ENCODE measurements at regions of chr2 and their contacts with region 1.

Region 1: GRCh38 chr2:144449028-144449406 is 70.9 kb downstream of the ZEB2 start:
- DNase-seq: peak; percentile 57
- ATAC-seq: peak; percentile 85
- H3K4me3 Mint-ChIP-seq: no peak overlapping the region
- H3K27ac Mint-ChIP-seq: no peak overlapping the region
- H3K4me1 Mint-ChIP-seq: peaks cover 71% of the 10 kb centered on the region
- H3K27me3 Mint-ChIP-seq: peaks cover 39% of the 10 kb centered on the region
- CTCF ChIP-seq: peak; percentile 19; the same call in 1 of the 2 replicates

Region 2: GRCh38 chr2:144274131-144274530 is 174.9 kb before region 1 on chr2:
- CTCF ChIA-PET with region 1: no interaction called
- POLR2A ChIA-PET with region 1: no interaction called
- DNase-seq: no peak
- ATAC-seq: no peak
- H3K4me3 Mint-ChIP-seq: no peak overlapping the region
- H3K27ac Mint-ChIP-seq: no peak overlapping the region
- H3K4me1 Mint-ChIP-seq: peaks cover 33% of the 10 kb centered on the region
- H3K27me3 Mint-ChIP-seq: no peaks in the 10 kb centered on the region
- CTCF ChIP-seq: no peak

Region 3: GRCh38 chr2:144438801-144439631 is 10.0 kb before region 1 on chr2:
- CTCF ChIA-PET with region 1: interaction called, 12 read pairs
- POLR2A ChIA-PET with region 1: no interaction called
- DNase-seq: no peak
- ATAC-seq: peak; percentile 60
- H3K4me3 Mint-ChIP-seq: no peak overlapping the region
- H3K27ac Mint-ChIP-seq: no peak overlapping the region
- H3K4me1 Mint-ChIP-seq: peaks cover 40% of the 10 kb centered on the region
- H3K27me3 Mint-ChIP-seq: no peaks in the 10 kb centered on the region
- CTCF ChIP-seq: no peak

Region 4: DNA sequence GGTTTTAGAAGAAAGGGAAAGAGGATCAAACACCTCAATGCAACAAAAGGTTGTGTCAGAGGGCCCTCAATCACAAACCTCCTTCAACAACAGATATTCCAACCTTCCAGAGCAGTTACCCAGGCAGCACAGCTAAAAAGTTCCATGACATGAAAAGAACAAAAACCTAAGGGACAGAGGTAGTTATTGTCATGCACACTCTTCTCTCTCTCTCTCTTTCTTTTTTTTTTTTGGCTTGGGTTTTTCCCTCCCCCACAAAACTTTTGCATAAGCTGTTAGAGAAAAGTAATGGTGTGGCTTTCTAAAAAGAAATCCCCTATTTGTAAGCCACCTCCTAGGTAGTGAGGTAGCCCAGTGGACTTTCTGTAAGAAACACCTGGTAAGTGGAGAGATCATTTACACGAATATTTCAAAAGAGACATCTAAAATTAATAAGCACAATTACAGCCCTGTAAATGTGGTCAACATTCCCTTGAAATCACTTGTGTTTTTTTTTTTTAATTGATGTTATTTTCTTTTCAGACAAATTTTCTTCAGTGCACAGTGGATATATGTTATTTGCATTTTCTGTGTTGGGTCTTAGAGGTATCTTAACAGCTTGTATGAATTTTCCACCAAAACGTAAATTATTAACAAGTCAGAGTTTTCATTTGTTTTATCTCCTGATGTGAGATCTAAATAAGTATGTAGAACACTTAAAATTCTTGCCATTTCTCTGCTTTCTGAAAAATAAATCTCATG is 22.5 kb after region 1 on chr2:
- CTCF ChIA-PET with region 1: interaction called, 23 read pairs
- POLR2A ChIA-PET with region 1: interaction called, 3 read pairs
- DNase-seq: no peak
- ATAC-seq: peak; percentile 48
- H3K4me3 Mint-ChIP-seq: peak overlapping the region; percentile 17
- H3K27ac Mint-ChIP-seq: peak overlapping the region; percentile 6; the same call in 1 of the 2 replicates
- H3K4me1 Mint-ChIP-seq: peaks cover 20% of the 10 kb centered on the region
- H3K27me3 Mint-ChIP-seq: no peaks in the 10 kb centered on the region
- CTCF ChIP-seq: no peak

Region 5: DNA sequence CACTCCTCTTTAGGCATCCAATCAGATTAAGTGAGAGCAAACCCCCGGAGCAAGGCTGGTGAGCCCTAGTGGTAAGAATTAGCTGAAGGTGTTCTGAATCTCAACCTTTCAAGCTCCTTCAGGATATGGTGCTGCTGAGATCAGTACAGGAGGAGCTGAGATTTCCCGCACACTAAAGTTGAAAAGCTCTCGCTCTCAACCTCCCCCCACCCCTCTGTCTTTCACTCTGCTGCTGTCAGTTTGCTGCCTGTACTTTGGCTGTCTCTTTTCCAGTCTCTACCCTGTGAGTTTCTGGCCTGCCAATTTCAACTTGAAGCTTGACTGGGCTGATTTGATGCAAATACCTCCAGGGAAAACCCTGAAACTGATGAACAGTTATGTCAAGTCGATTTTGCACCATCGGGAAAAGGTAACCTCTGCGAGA is 55.2 kb after region 1 on chr2:
- CTCF ChIA-PET with region 1: interaction called, 20 read pairs
- POLR2A ChIA-PET with region 1: no interaction called
- DNase-seq: no peak
- ATAC-seq: peak; percentile 95
- H3K4me3 Mint-ChIP-seq: no peak overlapping the region
- H3K27ac Mint-ChIP-seq: no peak overlapping the region
- H3K4me1 Mint-ChIP-seq: peaks cover 62% of the 10 kb centered on the region
- H3K27me3 Mint-ChIP-seq: peaks cover 20% of the 10 kb centered on the region
- CTCF ChIP-seq: no peak

Region 6: DNA sequence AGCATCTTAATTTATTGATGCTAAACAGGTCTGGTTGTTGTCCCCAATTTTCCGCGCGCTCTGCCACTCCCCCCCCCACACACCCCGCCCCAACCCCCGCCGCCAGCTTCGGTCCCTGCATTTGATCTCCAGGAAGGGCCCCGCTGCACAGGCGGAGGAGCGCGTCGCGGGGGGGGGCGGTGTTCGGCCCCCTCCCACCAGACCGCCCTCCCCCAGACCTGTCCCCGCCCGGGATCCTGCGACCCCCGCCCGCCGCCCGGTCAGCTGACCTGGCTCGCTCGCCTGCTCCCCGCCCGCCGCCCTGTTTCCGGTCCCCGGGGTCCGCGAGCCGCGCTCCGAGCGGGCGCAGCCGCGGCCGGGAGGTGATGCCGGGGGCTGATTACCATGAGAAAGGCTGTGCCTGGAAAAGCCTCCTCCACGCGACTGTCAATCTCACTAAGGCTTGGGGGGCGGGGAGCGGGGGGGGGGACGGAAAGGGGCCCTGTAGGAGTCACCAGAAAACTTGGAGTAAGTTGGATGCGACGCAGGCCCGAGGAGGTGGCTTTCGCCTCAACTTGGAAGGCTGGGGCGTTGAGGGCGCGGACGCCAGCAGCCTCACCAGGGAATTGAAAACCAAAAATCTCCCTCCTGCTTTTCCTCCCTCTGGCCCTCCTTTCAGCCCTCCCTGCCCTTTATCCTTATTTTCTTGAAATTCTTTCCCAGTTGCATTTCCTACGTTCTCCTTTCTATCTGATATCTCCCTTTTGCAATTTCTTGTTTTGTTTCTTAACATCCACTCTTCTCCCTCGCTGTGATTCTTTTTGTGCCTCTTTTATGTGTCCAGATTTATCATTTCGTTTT is 75.3 kb after region 1 on chr2:
- CTCF ChIA-PET with region 1: interaction called, 11 read pairs
- POLR2A ChIA-PET with region 1: no interaction called
- DNase-seq: peak; percentile 80
- ATAC-seq: peak; percentile 71
- H3K4me3 Mint-ChIP-seq: peak overlapping the region; percentile 71
- H3K27ac Mint-ChIP-seq: peak overlapping the region; percentile 69; the same call in 1 of the 2 replicates
- H3K4me1 Mint-ChIP-seq: peaks cover 44% of the 10 kb centered on the region
- H3K27me3 Mint-ChIP-seq: peaks cover 17% of the 10 kb centered on the region
- CTCF ChIP-seq: no peak